Colonic mucosa (tissue), 4 donors: ENCODE measurements at regions of chr7 and their contacts with region 1.

Region 1: DNA sequence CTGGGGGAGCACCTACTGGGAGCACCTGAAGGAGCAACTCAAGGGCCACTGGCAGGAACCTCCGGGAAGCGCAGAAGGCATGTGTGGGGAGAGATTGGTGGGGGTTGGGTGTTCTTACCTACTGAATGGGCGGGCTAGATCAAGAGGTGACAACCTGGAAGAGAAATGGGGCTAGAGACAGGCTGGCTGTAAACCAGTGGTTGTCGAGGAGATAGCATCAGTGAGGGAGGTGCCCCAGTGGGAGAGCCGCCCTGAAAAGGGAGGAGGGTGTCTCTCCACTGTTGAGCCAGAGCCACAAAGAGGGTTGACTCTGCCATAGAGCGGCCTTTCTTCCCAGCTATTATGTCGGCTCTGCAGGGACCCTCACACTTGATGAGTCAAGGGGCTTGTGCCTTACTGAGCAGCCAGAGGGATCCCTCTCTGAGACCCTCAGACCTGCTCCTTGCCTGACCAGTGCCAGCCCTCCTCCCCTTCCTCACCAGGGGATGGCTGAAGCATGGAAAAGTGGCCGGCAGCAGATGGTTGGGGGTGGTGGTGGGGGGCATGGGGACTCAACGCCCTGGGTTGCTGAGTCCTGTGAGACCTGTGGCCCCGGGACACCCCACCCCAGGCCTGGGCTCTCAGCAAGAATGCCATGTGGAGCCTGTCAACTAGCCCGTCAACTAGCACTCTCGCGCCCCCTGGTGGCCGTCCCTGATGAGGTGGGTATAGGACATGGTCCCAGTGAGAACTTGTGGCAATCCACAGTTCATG is 36.5 kb upstream of the PURB start:
- DNase-seq: peak; percentile 93
- H3K4me3 ChIP-seq: no peak overlapping the region
- H3K27ac ChIP-seq: no peak overlapping the region
- H3K4me1 ChIP-seq: no peaks in the 10 kb centered on the region
- H3K27me3 ChIP-seq: no peaks in the 10 kb centered on the region
- CTCF ChIP-seq: peak; percentile 88

Region 2: GRCh38 chr7:44587843-44588711 is 333.7 kb before region 1 on chr7:
- intact Hi-C with region 1: loop called (anchors 5 kb)
- DNase-seq: peak; percentile 71
- H3K4me3 ChIP-seq: no peak overlapping the region
- H3K27ac ChIP-seq: no peak overlapping the region
- H3K4me1 ChIP-seq: no peaks in the 10 kb centered on the region
- H3K27me3 ChIP-seq: no peaks in the 10 kb centered on the region
- CTCF ChIP-seq: peak; percentile 41

Region 3: GRCh38 chr7:44858161-44858560 is 63.6 kb before region 1 on chr7:
- intact Hi-C with region 1: loop called (anchors 2 kb)
- DNase-seq: no peak
- H3K4me3 ChIP-seq: no peak overlapping the region
- H3K27ac ChIP-seq: no peak overlapping the region
- H3K4me1 ChIP-seq: no peaks in the 10 kb centered on the region
- H3K27me3 ChIP-seq: no peaks in the 10 kb centered on the region
- CTCF ChIP-seq: no peak